ENCODE measurements at regions of chr16 and their contacts with region 1.

Region 1: GRCh38 chr16:75622761-75623605 is at the start of gene ADAT1:
- H3K4me3 ChIP-seq: peak within 1 kb of the TSS; percentile 70
- H3K27ac ChIP-seq: peak within 1 kb of the TSS; percentile 69
- H3K4me1 ChIP-seq: peaks cover 6% of the 10 kb centered on the region; the same call in 1 of the 2 replicates
- CTCF ChIP-seq: 0 out of 2 replicates have a peak, but pooled peaks have one; percentile 13

Region 2: GRCh38 chr16:75471723-75472633 is 151.0 kb before region 1 on chr16:
- CTCF ChIA-PET with region 1: interaction called, 21 read pairs
- POLR2A ChIA-PET with region 1: no interaction called
- H3K4me3 ChIP-seq: no peak overlapping the region
- H3K27ac ChIP-seq: no peak overlapping the region
- H3K4me1 ChIP-seq: no peaks in the 10 kb centered on the region
- CTCF ChIP-seq: peak; percentile 72

Region 3: GRCh38 chr16:75555707-75556430 is 67.1 kb before region 1 on chr16 and contains the start of gene TMEM231:
- CTCF ChIA-PET with region 1: interaction called, 3 read pairs
- POLR2A ChIA-PET with region 1: interaction called, 10 read pairs
- H3K4me3 ChIP-seq: peak within 1 kb of the TSS; percentile 69
- H3K27ac ChIP-seq: peak within 1 kb of the TSS; percentile 64
- H3K4me1 ChIP-seq: no peaks in the 10 kb centered on the region
- CTCF ChIP-seq: peak; percentile 87

Region 4: GRCh38 chr16:75566040-75566810 is 56.8 kb before region 1 on chr16 and contains the start of gene GABARAPL2:
- CTCF ChIA-PET with region 1: no interaction called
- POLR2A ChIA-PET with region 1: interaction called, 26 read pairs
- H3K4me3 ChIP-seq: peak within 1 kb of the TSS; percentile 88
- H3K27ac ChIP-seq: peak within 1 kb of the TSS; percentile 40; the same call in 1 of the 2 replicates
- H3K4me1 ChIP-seq: no peaks in the 10 kb centered on the region
- CTCF ChIP-seq: no peak

Region 5: DNA sequence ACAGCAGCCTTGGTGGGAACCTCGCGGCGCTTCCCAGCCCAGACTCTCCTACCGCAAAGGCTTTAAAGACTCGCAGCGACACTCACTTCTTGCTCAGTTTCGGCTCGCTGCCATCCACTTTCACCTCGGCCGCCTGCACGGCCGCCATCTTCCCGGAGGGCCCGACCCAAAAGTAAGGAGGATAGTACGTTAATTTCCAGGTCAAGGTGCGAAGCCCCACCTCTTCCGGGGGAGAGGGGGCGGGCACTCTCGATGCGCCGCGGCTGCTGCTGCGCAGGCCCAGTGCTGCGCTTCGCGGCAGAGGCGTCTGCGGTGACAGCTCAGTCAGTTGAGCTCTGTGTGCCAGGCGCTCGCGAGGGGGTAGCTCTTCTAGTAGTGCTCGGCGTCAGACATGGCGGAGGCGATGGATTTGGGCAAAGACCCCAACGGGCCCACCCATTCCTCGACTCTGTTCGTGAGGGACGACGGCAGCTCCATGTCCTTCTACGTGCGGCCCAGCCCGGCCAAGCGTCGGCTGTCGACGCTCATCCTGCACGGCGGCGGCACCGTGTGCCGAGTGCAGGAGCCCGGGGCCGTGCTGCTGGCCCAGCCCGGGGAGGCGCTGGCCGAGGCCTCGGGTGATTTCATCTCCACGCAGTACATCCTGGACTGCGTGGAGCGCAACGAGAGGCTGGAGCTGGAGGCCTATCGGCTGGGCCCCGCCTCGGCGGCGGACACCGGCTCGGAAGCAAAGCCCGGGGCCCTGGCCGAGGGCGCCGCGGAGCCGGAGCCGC is 24.7 kb after region 1 on chr16 and contains the starts of genes KARS1 and TERF2IP:
- CTCF ChIA-PET with region 1: interaction called, 3 read pairs
- POLR2A ChIA-PET with region 1: interaction called, 30 read pairs
- H3K4me3 ChIP-seq: peak within 1 kb of the TSS; percentile 88
- H3K27ac ChIP-seq: peak within 1 kb of the TSS; percentile 88
- H3K4me1 ChIP-seq: peaks cover 7% of the 10 kb centered on the region
- CTCF ChIP-seq: no peak

Region 6: GRCh38 chr16:75676909-75677308 is 53.9 kb after region 1 on chr16 and contains the start of gene CPHXL2:
- CTCF ChIA-PET with region 1: no interaction called
- POLR2A ChIA-PET with region 1: no interaction called
- H3K4me3 ChIP-seq: no peak within 1 kb of the TSS
- H3K27ac ChIP-seq: no peak within 1 kb of the TSS
- H3K4me1 ChIP-seq: no peaks in the 10 kb centered on the region
- CTCF ChIP-seq: no peak